GM13976 (cell line): ENCODE measurements at regions of chr15 and their contacts with region 1.

Region 1: DNA sequence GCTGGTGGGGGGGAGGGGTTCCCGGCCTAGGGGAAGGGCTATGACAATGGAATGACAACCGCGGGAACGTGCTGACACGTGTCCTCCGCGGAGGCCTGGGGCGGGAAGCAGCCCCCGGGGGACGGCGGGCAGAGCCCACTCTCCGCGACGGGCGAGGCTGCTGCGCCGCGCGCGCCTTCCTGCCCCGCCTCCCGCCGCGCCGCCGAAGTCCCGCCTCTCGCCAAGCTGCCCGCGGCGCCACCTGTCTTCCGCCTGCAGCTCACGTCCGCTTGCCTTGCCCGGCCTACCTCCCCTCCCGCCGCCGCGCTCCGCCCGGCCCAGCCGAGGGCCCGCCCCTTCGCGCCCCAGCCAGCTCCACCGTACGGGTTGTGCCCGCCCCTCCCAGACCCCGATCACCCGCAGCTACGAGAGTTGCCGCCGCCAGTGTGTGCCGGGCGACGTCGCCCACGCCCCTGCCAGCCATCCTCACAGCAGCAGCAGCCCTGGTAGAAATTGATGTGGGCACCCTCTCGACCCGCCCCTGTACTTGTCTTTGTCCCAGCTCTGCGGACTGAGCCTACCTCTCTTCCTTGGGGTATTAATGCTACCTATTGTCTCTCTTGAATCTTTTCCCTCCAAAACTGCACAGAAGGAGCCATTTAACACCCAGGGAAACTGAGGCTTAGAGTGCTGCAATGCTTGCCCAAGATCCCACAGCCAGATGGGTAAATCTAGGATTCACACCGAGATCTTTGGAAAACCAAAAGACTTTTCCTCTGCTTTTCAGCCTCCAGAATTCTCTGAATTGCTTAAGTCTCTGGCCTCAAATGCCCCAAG is at the start of gene PARP16:
- DNase-seq: peak; percentile 93
- CTCF ChIP-seq: peak; percentile 66

Region 2: DNA sequence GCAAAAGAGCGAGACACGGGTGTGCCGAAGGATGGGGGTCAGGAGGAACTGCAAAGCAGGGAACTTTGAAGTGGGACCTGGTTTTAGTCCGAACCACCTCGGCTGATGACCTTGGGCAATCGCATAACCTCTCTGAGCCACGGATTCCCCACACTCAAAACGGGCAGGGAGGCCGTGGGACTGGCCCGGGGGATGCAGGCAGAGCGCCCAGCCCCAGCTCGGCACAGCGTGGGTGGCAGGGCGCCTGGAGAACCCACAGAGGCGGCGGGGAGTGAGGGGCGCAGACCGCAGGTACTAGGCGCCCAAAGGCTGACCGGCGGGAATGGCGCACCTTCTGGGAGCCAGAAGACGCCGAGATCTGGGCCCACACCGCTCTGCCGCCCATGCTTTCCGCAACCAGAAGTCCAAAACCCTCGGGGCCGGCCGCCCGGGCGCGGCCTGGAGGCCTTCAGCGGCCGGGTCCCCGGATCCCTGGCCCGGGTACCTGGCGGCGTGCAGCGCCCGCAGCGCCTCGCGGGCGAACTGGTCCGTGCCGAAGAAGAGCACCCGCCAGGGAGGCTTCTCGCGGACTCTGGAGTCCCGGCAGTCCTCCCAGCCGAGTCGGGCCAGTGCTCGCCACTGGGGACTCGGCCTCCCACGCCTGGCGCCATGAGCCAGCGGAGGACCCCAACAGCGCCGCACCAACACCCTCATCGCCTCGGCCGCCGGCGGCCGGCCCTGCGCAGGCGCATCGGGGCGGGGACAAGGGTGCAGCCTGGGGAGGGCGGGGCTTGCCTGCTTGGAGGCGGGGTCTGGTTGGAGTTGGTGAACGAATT is 257.8 kb before region 1 on chr15 and contains the start of gene MTFMT:
- in situ Hi-C with region 1: loop called (anchors 25 kb)
- DNase-seq: peak; percentile 99
- CTCF ChIP-seq: no peak

Region 3: GRCh38 chr15:65184868-65185738 is 101.8 kb before region 1 on chr15 and contains the start of gene CLPX:
- in situ Hi-C with region 1: loop called (anchors 25 kb)
- DNase-seq: peak; percentile 95
- CTCF ChIP-seq: no peak

Region 4: DNA sequence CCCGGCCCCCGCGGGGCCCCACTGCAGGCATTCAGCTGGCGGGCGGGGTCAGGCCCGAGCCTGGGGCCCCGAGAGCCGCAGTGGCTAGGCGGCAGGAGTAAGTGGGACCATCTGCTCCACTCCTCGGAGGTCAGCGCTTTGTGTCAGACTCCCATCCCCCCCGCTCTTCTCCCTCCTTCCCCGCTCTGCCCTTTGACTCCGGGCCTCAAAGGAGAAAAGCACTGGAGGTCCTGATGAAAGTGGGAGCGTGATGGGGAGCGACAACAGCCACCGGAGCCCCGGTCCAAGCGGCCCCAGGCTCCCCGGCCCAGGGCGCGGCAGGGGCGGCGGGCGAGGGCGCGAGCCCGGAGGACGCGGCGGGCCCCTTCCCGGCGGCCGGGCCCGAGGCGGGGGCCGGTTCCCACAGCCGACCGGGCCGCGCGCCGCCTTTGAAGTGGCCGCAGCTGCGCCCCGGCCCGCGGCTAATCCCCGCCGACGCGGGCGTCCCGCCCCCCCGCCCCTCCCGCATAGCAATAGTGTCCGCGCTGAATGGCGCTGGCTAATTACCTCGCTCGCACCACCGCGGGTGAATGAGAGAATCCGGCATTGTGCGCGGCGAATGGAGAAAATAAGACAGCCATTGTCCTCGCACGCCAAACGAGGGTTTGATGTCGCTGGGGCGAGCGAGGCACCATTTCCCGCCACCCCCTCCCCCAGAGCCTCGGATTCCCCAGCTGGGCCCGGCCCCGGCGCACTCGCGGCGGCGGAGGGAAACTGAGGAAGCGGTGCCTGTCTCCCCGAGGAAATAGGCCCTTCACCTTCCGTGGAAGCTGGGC is 68.5 kb after region 1 on chr15:
- in situ Hi-C with region 1: no loop called
- DNase-seq: no peak
- CTCF ChIP-seq: no peak